ENCODE measurements at regions of chr12 and their contacts with region 1.

Region 1: GRCh38 chr12:56359851-56360767 is at the start of gene STAT2:
- DNase-seq: peak; percentile 100
- H3K4me3 Mint-ChIP-seq: peak within 1 kb of the TSS; percentile 97
- H3K27ac Mint-ChIP-seq: peak within 1 kb of the TSS; percentile 97
- H3K4me1 Mint-ChIP-seq: peaks cover 29% of the 10 kb centered on the region
- H3K27me3 Mint-ChIP-seq: no peaks in the 10 kb centered on the region
- total RNA-seq, gene STAT2: 70.2 and 71.3 TPM in 2 replicates

Region 2: DNA sequence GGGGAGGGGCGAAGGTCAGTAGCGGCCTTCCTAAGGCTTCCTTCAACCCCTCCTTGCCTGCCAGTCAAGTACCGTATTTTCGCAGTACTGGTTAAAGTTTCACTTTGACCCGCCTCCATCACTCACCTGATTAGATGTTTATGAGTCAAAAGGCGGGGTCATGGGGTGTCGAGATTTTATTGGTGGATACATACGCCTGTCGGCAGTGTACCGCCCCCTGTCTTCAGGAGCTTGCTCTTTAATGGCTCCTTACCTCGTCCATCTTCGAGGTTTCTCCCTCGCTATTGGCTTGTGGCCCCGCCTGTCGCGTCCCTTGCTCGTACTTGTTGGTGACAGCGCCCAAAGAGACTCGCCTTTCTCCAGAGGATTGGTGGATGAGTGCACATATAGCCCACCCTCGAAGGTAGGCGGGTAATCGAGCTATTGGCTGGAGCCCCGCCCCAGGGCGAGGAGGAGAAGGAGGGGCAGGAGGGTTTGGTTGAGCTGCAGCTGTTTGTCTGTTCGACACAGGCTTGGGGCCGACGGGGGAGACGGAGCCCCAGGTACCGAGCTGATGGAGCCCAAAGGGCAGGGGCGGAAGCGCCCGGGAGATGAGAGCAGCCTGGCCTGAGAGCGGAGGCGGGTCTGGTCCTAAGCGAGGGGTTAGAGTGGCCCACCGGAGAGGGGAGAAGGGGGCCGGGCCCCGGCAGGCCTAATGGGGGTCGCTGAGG is 386.4 kb before region 1 on chr12 and contains the start of gene RAB5B:
- intact Hi-C with region 1: loop called (anchors 1 kb)
- DNase-seq: peak; percentile 98
- H3K4me3 Mint-ChIP-seq: no peak within 1 kb of the TSS
- H3K27ac Mint-ChIP-seq: no peak within 1 kb of the TSS
- H3K4me1 Mint-ChIP-seq: peaks cover 20% of the 10 kb centered on the region
- H3K27me3 Mint-ChIP-seq: no peaks in the 10 kb centered on the region
- total RNA-seq, gene RAB5B: 42.6 and 47.0 TPM in 2 replicates

Region 3: DNA sequence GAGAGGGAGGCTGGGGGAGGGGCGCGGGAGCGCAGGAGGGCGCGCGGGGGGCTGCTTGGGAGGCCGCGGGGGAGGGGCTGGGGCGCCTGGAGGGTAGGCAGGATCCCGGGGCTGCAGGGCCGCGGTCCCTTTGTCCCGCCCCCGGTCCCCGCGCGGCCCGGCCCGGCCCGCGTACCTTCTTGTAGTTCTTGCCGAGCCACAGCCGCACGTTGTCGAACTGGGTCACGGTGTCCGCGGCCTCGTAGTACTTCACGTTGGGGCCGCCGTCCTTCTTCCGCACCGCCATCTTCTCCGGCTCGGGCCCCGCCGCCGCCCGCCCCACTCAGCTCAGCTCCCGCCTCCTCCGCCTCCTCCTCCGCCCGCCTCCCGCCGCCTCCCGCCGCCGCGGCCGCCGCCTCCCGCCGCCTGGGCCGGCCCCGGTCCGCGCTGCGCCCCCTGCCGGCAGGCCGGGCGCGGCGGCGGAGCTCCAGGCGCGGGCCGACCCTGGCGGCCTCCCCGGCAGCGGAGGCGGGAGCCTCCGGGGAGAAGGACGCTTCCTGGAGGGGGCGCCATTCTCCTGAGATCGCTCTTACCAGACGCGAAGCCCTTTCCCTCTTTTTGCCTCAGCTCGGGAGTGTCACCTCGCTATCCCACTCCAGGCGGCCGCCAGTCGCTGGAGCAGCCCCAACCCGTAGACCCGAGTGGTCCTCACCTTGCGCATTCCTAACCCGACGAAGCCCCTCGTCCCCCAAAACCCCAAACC is 170.8 kb before region 1 on chr12 and contains the start of gene SMARCC2:
- intact Hi-C with region 1: loop called (anchors 5 kb)
- DNase-seq: peak; percentile 85
- H3K4me3 Mint-ChIP-seq: peak within 1 kb of the TSS; percentile 95
- H3K27ac Mint-ChIP-seq: peak within 1 kb of the TSS; percentile 96
- H3K4me1 Mint-ChIP-seq: peaks cover 55% of the 10 kb centered on the region
- H3K27me3 Mint-ChIP-seq: peaks cover 2% of the 10 kb centered on the region
- total RNA-seq, gene SMARCC2: 124 and 132 TPM in 2 replicates

Region 4: DNA sequence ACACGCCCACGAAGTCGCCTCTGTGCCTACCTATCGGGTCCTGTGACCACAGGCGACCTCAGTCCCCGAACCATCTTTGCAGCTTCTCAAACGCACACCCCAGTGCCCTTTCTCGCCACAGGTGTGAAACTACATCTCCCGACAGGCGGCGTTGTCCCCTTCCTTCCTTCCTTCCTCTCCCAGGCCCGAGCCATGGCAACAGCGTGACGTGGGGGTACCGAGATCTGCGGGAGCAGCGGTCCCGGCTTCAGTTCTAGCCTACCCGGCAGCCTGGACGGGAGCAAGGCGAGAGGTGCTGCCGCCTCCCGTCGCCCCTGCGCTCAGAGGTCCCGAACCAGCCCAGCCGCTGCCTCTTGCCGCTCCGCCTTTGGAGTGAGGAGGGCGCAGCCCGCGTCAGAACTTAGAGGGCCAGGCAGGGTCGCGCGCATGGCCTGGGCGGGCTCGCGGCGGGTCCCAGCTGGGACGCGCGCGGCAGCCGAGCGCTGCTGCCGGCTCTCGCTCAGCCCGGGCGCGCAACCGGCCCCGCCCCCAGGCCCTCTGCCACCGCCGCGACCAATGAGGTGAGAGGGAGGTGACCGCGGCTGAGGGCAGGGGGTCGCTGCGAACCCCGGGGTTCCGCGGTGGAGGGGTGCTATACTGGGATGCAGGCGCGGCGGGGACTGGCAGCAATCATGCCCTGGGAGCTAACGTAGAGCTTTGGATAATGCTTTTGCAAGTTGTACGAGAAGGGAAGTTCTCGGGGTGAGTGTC is 93.2 kb before region 1 on chr12 and contains the start of gene COQ10A:
- intact Hi-C with region 1: loop called (anchors 2 kb)
- DNase-seq: peak; percentile 84
- H3K4me3 Mint-ChIP-seq: peak within 1 kb of the TSS; percentile 96
- H3K27ac Mint-ChIP-seq: peak within 1 kb of the TSS; percentile 87
- H3K4me1 Mint-ChIP-seq: peaks cover 15% of the 10 kb centered on the region
- H3K27me3 Mint-ChIP-seq: no peaks in the 10 kb centered on the region
- total RNA-seq, gene COQ10A: 17.8 and 18.0 TPM in 2 replicates

Region 5: DNA sequence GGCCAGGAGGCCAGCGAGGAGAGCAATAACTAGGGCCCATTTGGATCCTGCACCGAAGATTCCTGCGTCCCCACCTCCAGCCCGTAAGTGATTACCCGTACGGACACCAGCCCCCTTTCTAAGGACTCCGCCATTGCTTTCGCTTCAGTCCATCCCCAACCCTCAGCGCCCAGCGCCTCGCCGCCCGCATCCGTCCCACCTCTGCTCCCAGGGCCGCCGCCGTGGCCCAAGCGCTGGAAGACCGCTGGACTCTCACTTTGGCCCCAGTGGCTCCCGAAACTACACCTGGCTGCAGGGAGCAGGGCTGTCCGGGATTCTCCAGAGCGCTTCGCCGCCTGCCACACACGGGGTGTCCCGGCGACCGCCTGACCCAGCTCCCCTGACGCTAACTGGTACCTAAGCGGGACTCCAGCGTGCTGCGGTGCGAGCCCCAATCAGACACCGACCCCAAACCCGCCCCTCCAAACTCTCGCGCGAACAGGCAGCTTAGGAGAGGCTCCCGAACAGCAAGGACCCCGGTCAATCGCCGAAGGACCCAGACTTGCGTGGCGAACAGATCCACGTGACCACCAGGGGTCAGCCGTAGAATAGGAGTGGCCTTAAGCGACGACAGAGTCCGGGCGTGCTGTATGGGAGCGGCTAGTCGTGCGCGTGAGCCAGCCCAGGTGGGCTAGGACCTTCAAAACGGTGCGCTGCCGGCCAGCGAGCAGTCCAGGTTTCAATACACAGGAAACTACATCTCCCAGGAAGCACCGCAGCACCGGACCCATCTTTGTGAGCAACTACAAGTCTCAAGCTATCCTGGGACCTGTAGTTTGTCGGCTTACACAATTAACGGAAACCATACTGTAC is 44.3 kb before region 1 on chr12 and contains the start of gene CNPY2:
- intact Hi-C with region 1: loop called (anchors 1 kb)
- DNase-seq: peak; percentile 83
- H3K4me3 Mint-ChIP-seq: peak within 1 kb of the TSS; percentile 98
- H3K27ac Mint-ChIP-seq: peak within 1 kb of the TSS; percentile 96
- H3K4me1 Mint-ChIP-seq: peaks cover 12% of the 10 kb centered on the region
- H3K27me3 Mint-ChIP-seq: no peaks in the 10 kb centered on the region
- total RNA-seq, gene CNPY2: 170 and 172 TPM in 2 replicates

Region 6: DNA sequence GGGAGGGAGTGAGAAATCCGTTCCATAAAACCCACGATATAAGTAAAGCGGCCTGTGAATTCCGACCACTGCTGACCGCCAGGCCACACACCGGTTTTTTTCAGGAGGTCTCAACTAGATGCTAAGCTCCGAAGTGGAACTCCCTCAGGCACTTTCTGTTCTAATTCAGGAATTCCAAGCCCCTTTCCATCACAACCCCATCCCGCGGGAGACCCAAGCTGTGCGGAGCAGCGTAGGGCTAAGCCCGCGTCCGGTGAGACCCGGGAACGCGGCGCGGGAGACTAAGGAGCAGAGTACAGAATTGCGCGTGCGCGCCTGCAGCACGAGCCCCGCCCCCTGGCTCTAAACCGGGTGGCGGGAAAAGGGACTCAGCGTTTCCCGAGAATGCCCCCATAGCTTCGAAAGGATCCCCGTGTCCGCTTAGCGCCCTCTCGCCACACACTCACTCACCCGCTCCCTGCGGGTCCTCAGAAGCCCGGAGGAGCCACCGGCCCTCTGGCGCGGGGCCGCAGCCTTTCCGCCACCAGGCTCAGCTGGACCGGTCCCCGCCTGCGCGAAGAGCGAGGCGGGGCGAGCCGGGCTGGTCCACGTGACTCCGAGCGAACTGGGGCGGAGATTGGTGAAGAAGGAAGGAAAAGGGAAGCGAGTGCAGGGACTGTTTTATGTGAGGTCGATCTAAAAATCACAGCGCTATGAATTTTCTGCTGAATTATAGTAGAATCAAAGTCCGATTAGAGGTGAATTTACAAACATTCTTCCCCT is 88.9 kb after region 1 on chr12 and contains the start of gene TIMELESS:
- intact Hi-C with region 1: loop called (anchors 1 kb)
- DNase-seq: peak; percentile 87
- H3K4me3 Mint-ChIP-seq: peak within 1 kb of the TSS; percentile 92
- H3K27ac Mint-ChIP-seq: peak within 1 kb of the TSS; percentile 85
- H3K4me1 Mint-ChIP-seq: peaks cover 27% of the 10 kb centered on the region
- H3K27me3 Mint-ChIP-seq: no peaks in the 10 kb centered on the region
- total RNA-seq, gene TIMELESS: 44.9 and 45.8 TPM in 2 replicates

Region 7: GRCh38 chr12:56645717-56646446 is 285.8 kb after region 1 on chr12 and contains the start of gene ATP5F1B:
- intact Hi-C with region 1: loop called (anchors 1 kb)
- DNase-seq: peak; percentile 91
- H3K4me3 Mint-ChIP-seq: peak within 1 kb of the TSS; percentile 96
- H3K27ac Mint-ChIP-seq: peak within 1 kb of the TSS; percentile 95
- H3K4me1 Mint-ChIP-seq: peaks cover 37% of the 10 kb centered on the region
- H3K27me3 Mint-ChIP-seq: no peaks in the 10 kb centered on the region
- total RNA-seq, gene ATP5F1B: 714 and 716 TPM in 2 replicates

Measured in activated T-helper 1 cell treated with anti-CD3 and anti-CD28 coated beads, Interleukin-12 subunit alpha, Interleukin-12 subunit beta, Interleukin-2, Interleukin-4 antibody, amounts not matched to agents 30 ng/mL and 10 ng/mL and 1 ng/mL, durations not matched to agents 14 hours and 24 hours and 36 hours (primary cell).